GM10248 (cell line): ENCODE measurements at regions of chr1 and their contacts with region 1.

Region 1: GRCh38 chr1:59971464-59971911 is 44.9 kb upstream of the CYP2J2 start:
- DNase-seq: peak; percentile 69
- CTCF ChIP-seq: peak; percentile 87

Region 2: GRCh38 chr1:59947047-59947938 is 24.2 kb before region 1 on chr1:
- CTCF ChIA-PET with region 1: interaction called, 32 read pairs
- POLR2A ChIA-PET with region 1: no interaction called
- DNase-seq: peak; percentile 63
- CTCF ChIP-seq: peak; percentile 87

Region 3: GRCh38 chr1:59986516-59987310 is 15.2 kb after region 1 on chr1:
- CTCF ChIA-PET with region 1: interaction called, 40 read pairs
- POLR2A ChIA-PET with region 1: no interaction called
- DNase-seq: no peak
- CTCF ChIP-seq: no peak

Region 4: GRCh38 chr1:59997479-59998115 is 26.1 kb after region 1 on chr1:
- CTCF ChIA-PET with region 1: interaction called, 11 read pairs
- POLR2A ChIA-PET with region 1: no interaction called
- DNase-seq: no peak
- CTCF ChIP-seq: no peak

Region 5: DNA sequence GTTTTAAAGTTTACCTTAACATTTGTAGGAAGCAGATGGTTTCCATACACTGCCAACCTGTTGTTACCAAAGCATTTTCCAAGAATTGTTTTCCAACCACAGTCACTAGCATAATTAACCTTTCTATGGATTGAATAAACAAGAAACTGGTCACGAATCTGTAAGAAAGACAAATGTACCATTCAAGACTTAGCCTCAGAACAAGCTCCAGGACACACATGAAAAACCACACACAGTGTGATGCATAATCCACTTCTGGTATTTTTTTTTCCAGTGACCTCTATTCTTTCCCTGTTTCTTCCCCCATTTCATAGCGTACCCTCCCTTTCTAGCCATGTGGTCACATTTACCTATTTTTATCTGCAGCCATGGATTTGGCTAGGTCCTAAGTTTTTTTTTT is 131.7 kb after region 1 on chr1:
- CTCF ChIA-PET with region 1: no interaction called
- POLR2A ChIA-PET with region 1: no interaction called
- DNase-seq: no peak
- CTCF ChIP-seq: no peak

Region 6: DNA sequence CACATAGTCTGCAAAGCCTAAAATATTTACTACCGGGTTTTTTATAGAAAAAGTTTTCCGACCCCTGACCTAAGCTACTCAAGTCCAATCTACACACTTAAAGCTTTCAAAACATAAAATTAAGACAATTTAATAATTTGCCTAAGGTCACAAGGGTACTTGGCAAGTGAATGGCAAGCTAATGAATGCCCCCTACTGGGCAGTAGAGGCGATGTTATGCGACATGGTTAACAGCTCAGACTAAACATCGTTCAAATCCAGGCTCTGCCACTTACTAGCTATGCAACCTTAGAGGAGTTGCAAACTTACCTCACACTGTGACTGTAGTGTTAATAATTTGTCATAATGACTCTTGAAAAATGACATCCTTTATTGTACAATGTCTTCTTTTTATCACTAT is 793.7 kb after region 1 on chr1:
- CTCF ChIA-PET with region 1: interaction called, 10 read pairs
- POLR2A ChIA-PET with region 1: no interaction called
- DNase-seq: peak; percentile 9
- CTCF ChIP-seq: peak; percentile 16

Region 7: DNA sequence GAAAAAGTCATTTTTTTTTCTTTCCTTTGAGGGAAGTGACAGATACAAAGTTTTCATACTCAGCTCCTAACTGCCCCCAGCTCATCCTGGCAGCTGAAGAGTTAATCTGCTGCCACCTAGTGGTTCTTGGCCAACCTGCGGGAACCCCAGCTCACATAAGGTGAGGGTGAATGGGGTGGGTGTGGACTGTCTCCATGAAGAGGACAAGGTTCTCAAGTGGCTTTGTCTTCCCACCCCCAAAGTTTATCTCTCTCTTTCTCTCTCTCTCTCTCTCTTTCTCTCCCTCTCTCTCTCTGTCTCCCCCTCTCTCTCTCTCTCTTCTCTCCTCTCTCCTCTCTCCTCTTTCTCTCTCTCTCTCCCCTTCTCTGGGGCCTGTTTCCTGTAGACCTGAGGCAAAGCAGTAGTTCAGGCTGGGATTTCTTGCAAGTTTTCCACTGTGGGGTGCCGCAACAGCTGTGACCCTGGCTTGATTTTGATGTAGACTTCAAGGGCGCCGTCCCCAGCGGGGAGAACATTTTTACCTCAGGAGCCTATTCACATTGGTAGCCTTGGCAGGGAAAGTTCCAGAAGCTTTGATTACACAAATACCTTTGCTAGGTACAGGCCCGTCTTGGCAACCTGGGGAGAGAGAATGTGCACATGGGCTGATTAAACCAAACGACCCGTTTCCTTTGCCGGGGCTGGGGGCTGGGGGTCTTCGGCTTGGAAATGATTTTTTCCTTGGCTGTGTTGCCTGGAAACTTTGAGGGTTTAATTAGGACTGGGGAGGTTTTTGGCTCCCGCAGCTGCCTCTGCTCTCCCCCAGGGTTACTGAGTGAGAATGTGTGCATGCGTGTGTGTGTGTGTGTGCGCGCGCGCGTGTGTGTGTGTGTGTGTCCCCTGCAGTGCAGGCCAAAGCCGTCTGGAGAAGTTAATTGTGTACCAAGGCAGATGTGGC is 1617.5 kb after region 1 on chr1:
- CTCF ChIA-PET with region 1: interaction called, 18 read pairs
- POLR2A ChIA-PET with region 1: no interaction called
- DNase-seq: peak; percentile 67
- CTCF ChIP-seq: peak; percentile 93